ENCODE measurements at regions of chr22 and their contacts with region 1.

Region 1: DNA sequence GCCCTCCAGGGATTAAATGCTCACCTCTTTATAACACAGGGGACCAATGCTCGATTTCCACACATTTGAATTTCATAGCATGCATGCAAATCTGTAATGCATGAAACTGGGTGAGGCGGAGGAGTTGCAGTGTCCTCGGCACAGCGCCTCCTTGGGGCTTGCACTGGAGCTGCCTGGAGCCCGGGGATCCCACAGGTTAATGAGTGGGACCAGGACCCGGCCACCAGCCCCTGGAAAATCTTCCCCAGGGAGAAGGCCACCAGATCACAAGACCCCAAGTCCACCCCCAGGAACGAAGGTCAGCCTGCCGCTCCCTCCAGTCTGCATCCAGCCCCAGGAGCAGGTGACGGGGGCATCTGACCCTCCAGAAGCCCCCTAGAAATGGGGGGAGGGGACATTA is 119.1 kb downstream of the MN1 start:
- H3K4me3 ChIP-seq: no peak overlapping the region
- H3K27ac ChIP-seq: no peak overlapping the region
- H3K4me1 ChIP-seq: no peaks in the 10 kb centered on the region
- CTCF ChIP-seq: no peak

Region 2: DNA sequence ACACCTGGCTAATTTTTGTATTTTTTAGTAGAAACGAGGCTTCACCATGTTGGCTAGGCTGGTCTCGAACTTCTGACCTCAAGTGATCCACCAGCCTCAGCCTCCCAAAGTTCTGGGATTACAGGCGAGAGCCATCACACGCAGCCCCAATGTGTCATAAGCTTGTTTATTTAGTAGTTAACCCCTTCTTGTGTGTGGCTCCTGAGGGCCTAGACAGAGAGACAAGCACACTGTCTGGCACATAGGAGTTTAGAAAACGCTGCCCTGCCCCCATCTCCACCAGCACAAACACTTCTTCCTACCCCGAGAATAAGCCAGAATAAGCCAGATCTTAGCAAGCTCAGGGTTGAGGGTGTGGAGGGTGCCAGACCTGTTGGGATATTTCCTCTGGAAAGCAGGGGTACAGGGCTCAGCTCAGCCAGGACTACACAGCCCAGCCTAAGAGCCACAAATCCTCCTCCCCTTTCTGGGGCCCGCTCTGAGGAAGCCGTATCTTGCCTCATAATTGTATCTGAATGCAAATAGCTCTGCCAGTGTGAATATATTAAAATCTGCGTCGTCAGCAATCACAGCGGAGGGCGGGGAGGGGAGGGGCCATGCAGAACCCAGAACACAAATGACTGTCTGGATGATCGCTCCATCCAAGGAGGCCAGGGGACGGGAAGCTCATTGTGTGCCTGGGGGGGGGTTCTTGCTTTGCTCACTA is 128.2 kb before region 1 on chr22:
- CTCF ChIA-PET with region 1: no interaction called
- POLR2A ChIA-PET with region 1: no interaction called
- H3K4me3 ChIP-seq: no peak overlapping the region
- H3K27ac ChIP-seq: peak overlapping the region; percentile 35
- H3K4me1 ChIP-seq: peaks cover 7% of the 10 kb centered on the region
- CTCF ChIP-seq: no peak

Region 3: DNA sequence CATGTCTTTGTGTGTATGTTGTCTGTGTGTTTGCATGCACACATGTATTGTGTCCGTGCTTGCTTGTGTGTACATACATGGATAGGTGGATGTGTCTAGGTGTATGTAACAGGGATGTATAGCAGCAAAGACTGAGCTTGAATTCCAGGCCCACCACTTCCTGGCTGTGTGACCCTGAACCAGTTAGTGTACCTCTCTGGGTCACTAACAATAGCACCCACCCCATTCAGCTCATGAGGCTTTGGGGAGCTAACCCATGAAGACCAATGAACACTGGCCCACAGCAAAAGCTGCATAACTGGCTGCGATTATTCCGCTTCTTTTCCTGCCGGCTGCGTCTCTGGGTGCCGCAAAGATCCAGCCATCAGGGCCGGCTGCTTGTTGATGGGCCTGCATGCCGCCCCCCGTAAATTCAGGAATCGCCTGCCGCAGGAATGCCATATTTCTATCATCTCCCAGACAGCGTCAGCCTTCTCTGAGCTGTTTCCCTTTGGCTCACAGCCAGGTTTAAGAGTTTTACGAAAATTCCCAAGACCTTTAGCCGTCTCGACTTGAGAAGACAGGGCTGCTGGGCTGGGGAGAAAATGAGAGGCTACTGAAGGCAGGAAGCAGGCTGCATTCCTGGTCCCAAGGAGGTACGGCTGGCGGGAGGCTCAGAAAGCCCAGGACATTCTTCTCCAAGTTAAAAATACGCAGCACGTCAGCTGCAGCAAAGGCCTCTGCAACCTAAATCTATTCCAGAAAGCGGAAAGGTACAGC is 105.4 kb before region 1 on chr22:
- CTCF ChIA-PET with region 1: no interaction called
- POLR2A ChIA-PET with region 1: no interaction called
- H3K4me3 ChIP-seq: no peak overlapping the region
- H3K27ac ChIP-seq: no peak overlapping the region
- H3K4me1 ChIP-seq: no peaks in the 10 kb centered on the region
- CTCF ChIP-seq: no peak

Region 4: DNA sequence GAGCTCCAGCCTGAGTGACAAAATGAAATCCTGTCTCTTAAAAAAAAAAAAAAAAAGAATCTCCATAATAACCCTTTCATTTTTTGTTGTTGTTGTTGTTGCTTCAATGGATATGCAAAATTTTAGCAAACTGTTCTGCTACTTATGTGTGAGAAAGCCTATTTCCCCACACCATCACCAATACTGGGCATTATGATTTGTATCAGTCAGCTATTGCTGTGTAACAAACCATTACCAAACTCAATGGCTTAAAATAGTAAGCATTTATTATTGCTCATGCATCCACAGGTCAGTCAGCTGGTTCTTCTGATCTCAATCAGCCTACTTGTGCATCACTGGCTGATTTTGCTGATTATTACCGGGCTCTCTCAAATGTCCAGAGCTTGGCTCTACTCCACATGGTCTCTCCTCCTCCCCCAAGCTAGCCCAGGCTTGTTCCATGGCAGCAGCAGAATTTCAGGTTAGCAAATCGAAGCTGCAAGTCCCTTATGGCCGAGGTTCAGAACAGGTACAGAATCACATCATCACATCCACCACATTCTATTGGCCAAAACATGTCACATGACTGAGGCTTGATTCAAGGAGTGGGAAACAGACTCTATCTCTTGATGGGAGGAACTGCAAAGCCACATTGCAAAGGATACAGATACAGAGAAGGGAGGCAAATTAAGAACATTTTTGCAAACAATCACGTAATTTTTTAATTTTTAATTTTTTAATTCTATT is 16.0 kb before region 1 on chr22:
- CTCF ChIA-PET with region 1: interaction called, 10 read pairs
- POLR2A ChIA-PET with region 1: interaction called, 4 read pairs
- H3K4me3 ChIP-seq: no peak overlapping the region
- H3K27ac ChIP-seq: no peak overlapping the region
- H3K4me1 ChIP-seq: peaks cover 3% of the 10 kb centered on the region
- CTCF ChIP-seq: no peak